ENCODE measurements at regions of chr17 and their contacts with region 1.

Region 1: GRCh38 chr17:76296186-76296585 is 11.9 kb downstream of the QRICH2 start:
- DNase-seq: no peak
- ATAC-seq: no peak
- H3K4me3 ChIP-seq: no peak overlapping the region
- H3K27ac ChIP-seq: no peak overlapping the region
- H3K4me1 ChIP-seq: no peaks in the 10 kb centered on the region
- H3K27me3 ChIP-seq: no peaks in the 10 kb centered on the region
- CTCF ChIP-seq: no peak

Region 2: DNA sequence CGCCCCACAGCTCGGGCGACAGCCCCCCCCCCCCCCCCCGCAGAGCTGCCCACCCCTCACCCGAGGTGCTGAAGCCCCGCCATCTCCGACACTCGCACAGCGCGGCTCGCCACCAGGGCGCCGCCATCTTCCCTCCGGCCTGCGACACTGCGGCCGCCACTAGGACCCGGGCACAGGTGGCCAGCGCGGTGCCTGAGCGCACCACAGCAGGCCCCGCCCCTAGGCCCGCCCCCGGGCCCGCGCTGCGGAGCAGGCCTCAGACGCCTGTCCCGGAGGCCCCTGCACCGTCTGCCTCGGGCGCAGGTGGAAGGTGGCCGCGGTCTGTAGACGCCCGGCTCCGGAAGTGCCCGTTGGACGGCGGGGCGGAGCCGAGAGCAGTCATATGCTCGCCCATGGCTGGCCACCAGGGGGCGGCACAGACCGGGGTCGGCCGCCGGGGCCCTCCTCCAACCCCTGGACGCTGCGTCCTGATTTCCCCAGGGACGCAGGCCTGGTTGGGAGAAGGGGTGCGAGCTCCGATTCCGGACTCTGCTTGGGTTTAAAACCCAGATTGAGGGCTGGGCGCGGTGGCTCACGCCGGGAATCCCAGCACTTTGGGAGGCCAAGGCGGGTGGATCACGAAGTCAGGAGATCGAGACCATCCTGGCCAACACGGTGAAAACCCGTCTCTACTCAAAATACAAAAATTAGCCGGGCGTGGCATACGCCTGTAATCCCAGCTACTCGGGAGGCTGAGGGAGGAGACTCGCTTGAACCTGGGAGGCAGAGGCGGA is 391.3 kb before region 1 on chr17 and contains the start of gene MRPL38:
- intact Hi-C with region 1: loop called in 1 of 2 experiments (anchors 10 kb)
- DNase-seq: peak; percentile 93 to 96
- ATAC-seq: peak; percentile 94 to 98 (median 96)
- H3K4me3 ChIP-seq: peak within 1 kb of the TSS; percentile 98
- H3K27ac ChIP-seq: peak within 1 kb of the TSS; percentile 86
- H3K4me1 ChIP-seq: peaks cover 13% of the 10 kb centered on the region
- H3K27me3 ChIP-seq: no peaks in the 10 kb centered on the region
- CTCF ChIP-seq: peak; percentile 99
- total RNA-seq, gene MRPL38: 107 to 168 (median 125) TPM

Region 3: GRCh38 chr17:76014184-76014924 is 281.8 kb before region 1 on chr17:
- intact Hi-C with region 1: loop called (anchors 5 to 10 kb)
- DNase-seq: peak; percentile 73 to 82
- ATAC-seq: peak; percentile 83 to 96 (median 90)
- H3K4me3 ChIP-seq: no peak overlapping the region
- H3K27ac ChIP-seq: no peak overlapping the region
- H3K4me1 ChIP-seq: peaks cover 3% of the 10 kb centered on the region
- H3K27me3 ChIP-seq: peaks cover 0 to 1% (median 0%) of the 10 kb centered on the region in 3 donors
- CTCF ChIP-seq: peak; percentile 97

Region 4: GRCh38 chr17:76121932-76122430 is 174.2 kb before region 1 on chr17:
- intact Hi-C with region 1: loop called (anchors 1 to 5 kb)
- DNase-seq: peak in 1 of 2 donors; percentile 57
- ATAC-seq: peak; percentile 44 to 64 (median 46)
- H3K4me3 ChIP-seq: peak overlapping the region; percentile 64
- H3K27ac ChIP-seq: peak overlapping the region; percentile 46
- H3K4me1 ChIP-seq: no peaks in the 10 kb centered on the region
- H3K27me3 ChIP-seq: no peaks in the 10 kb centered on the region
- CTCF ChIP-seq: no peak

Region 5: DNA sequence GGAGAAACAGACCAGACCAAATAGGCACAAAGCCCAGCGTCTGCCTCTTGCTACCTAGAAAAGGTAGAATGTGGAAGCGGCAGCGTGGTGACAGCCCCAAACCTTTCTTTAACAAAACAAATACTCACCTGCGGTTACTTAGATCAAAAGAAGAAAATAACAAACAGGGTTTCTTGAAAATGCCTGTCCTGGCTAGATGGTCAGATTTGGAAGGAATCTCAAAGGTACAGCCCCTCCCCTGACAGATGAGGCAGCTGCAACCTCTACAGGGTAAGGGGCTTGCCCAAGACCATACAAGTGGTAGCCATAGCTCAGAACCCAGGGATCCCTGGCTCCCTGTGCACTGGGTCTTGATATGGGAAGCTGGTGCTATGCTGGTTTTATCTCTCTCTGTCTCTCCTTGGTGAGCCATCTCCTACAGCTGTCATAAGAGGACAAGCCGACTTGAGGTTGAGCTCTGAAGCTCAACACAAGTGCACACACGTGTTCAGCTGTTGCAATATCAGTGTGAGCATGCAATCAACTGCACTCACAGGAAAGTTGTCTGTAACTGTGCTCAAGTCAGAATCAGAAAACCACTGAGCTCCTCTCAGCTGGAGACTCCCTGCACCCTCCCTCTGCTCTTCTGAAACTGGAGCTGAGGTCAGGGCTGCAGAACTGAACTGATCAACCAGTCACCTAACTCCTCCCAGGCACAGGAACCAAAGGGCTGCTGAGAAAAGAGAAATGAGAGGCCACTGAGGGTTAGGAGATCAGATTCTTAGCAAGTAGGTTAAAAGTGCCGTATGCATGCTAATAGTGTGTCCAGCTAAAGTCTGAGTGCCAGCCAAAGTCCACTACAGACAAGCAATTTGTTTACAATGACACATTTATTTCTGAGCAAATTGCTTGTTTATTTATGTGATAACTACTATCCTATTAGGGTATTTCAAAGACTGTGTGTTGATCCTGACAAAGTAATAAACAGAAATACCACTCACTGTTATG is 49.8 kb before region 1 on chr17:
- intact Hi-C with region 1: no loop called
- DNase-seq: peak in 1 of 2 donors; percentile 60
- ATAC-seq: peak; percentile 75 to 84 (median 81)
- H3K4me3 ChIP-seq: no peak overlapping the region
- H3K27ac ChIP-seq: peak overlapping the region; percentile 86
- H3K4me1 ChIP-seq: peaks cover 75% of the 10 kb centered on the region
- H3K27me3 ChIP-seq: no peaks in the 10 kb centered on the region
- CTCF ChIP-seq: no peak

Region 6: DNA sequence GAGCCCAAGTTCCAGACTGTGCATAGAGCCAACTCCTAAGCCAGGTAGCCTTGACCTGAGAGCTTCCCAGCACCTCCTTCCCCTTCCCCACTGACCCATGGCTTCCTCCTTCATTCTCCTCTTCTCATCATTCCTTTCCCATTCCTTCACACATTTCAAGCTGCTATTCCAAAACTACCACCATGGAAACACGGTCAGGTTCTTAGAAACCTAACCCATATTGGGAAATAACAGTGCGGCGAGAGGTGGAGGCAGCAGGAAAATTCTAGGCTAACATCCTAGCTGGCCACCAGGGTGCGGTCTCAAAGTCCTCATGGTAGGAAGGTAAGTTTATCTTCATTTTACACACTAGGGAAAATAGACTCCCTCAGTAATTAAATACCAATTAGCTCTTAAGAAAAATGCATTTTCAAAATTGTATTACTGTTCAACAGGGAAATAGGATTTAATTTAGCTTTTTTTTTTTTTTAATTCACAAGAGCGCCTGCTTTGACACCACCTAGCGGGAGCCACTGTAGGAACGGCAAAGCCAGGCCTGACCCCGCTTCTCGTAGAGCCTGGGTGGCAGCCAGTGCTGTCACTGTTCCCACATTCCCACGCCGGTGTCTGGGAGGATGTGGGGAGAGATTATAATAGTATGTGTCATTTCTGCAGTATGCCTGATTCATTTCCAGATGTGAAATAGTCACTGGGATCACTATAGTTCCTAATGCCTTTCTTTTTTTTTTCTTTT is 74.2 kb after region 1 on chr17:
- intact Hi-C with region 1: no loop called
- DNase-seq: peak; percentile 90 to 93
- ATAC-seq: peak; percentile 94 to 99 (median 96)
- H3K4me3 ChIP-seq: no peak overlapping the region
- H3K27ac ChIP-seq: peak overlapping the region; percentile 53
- H3K4me1 ChIP-seq: peaks cover 13% of the 10 kb centered on the region
- H3K27me3 ChIP-seq: peaks cover 0 to 2% (median 0%) of the 10 kb centered on the region in 3 donors
- CTCF ChIP-seq: peak; percentile 59

Region 7: GRCh38 chr17:76879691-76880090 is 583.5 kb after region 1 on chr17:
- intact Hi-C with region 1: no loop called
- DNase-seq: no peak
- ATAC-seq: no peak
- H3K4me3 ChIP-seq: no peak overlapping the region
- H3K27ac ChIP-seq: no peak overlapping the region
- H3K4me1 ChIP-seq: no peaks in the 10 kb centered on the region
- H3K27me3 ChIP-seq: peaks cover 0 to 28% (median 3%) of the 10 kb centered on the region in 3 donors
- CTCF ChIP-seq: no peak

Measured in psoas muscle (tissue), 8 donors.